ENCODE measurements at regions of chr2 and their contacts with region 1.

Region 1: GRCh38 chr2:105744091-105744908 is 412 bp upstream of the NCK2 start:
- DNase-seq: no peak
- ATAC-seq: peak; percentile 64 to 68
- H3K4me3 ChIP-seq: peak overlapping the region; percentile 70 to 84 (median 74)
- H3K27ac ChIP-seq: peak overlapping the region; percentile 81 to 92 (median 90)
- H3K4me1 ChIP-seq: peaks cover 35 to 48% of the 10 kb centered on the region in 2 donors
- H3K27me3 ChIP-seq: no peaks in the 10 kb centered on the region
- CTCF ChIP-seq: no peak
- POLR2A ChIP-seq: peak in 1 of 2 donors; percentile 41

Region 2: GRCh38 chr2:105388971-105389381 is 355.3 kb before region 1 on chr2:
- in situ Hi-C with region 1: no loop called
- intact Hi-C with region 1: loop called (anchors 10 kb)
- DNase-seq: no peak
- ATAC-seq: peak; percentile 17 to 34
- H3K4me3 ChIP-seq: no peak overlapping the region
- H3K27ac ChIP-seq: peak overlapping the region; percentile 72 to 79 (median 76)
- H3K4me1 ChIP-seq: peaks cover 44 to 56% of the 10 kb centered on the region in 2 donors
- H3K27me3 ChIP-seq: no peaks in the 10 kb centered on the region
- CTCF ChIP-seq: no peak
- POLR2A ChIP-seq: no peak

Region 3: GRCh38 chr2:105541189-105542050 is 202.9 kb before region 1 on chr2:
- in situ Hi-C with region 1: no loop called
- intact Hi-C with region 1: no loop called
- DNase-seq: no peak
- ATAC-seq: no peak
- H3K4me3 ChIP-seq: no peak overlapping the region
- H3K27ac ChIP-seq: no peak overlapping the region
- H3K4me1 ChIP-seq: no peaks in the 10 kb centered on the region
- H3K27me3 ChIP-seq: no peaks in the 10 kb centered on the region
- CTCF ChIP-seq: no peak
- POLR2A ChIP-seq: no peak

Region 4: DNA sequence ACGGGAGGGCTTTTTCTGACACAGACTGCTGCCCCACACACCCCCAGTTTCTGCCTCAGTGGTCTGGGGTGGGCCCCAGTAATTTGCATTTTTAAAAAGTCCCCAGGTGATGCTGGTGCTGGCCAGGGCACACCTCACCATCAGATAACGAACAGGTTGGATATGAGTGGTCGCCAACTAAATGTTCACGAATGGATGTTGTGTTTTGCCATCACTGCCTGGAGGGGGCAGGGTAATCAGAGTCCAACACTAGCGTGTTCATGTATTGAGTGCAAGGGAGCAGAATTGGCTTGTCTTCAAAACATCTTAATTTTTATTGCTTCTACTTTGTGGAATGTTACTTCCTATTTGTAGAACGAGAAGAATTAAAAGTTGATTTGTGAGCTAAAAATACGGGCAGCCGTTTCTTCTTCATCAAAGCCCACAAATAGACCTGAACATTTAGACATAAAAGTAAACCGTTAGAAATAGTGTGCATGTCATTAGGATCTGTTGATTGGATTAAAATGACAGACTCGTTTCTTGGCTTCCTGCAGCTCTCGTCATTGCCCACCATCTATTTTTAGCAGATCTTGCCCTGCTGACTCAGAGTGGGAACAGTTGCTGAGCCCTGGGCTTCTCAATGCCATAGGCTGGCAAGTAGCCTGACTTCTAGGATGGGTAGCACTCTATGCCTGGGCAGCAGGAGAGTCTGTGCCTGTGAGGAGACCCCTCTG is 45.6 kb after region 1 on chr2:
- in situ Hi-C with region 1: no loop called
- intact Hi-C with region 1: loop called (anchors 5 kb)
- DNase-seq: peak; percentile 78 to 88
- ATAC-seq: peak; percentile 97 to 100
- H3K4me3 ChIP-seq: peak overlapping the region; percentile 23 to 45 (median 25)
- H3K27ac ChIP-seq: peak overlapping the region; percentile 76 to 88 (median 80)
- H3K4me1 ChIP-seq: peaks cover 37 to 57% of the 10 kb centered on the region in 2 donors
- H3K27me3 ChIP-seq: no peaks in the 10 kb centered on the region
- CTCF ChIP-seq: no peak
- POLR2A ChIP-seq: no peak

Region 5: DNA sequence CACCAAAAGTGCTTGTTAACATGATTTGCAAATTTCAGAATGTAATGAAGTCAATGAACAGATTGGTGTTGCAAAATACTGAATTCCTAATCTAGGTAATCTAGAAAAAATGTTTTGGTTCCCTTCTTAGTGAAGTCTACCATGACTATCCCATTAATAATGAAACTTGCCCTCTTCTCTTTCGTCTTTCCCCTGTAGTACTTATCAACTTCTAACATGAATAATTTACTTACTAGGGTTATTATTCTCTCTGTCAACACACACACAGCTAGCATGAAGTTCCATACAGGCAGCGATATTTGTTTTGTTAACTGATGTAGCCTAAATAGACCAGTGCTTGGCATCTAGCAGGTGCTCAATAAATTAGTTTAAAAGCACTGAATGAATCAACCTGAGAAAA is 160.6 kb after region 1 on chr2:
- in situ Hi-C with region 1: no loop called
- intact Hi-C with region 1: loop called (anchors 5 kb)
- DNase-seq: no peak
- ATAC-seq: no peak
- H3K4me3 ChIP-seq: no peak overlapping the region
- H3K27ac ChIP-seq: peak overlapping the region in 2 of 4 donors; percentile 83 to 91
- H3K4me1 ChIP-seq: peaks cover 46 to 48% of the 10 kb centered on the region in 2 donors
- H3K27me3 ChIP-seq: no peaks in the 10 kb centered on the region
- CTCF ChIP-seq: no peak
- POLR2A ChIP-seq: no peak

Region 6: GRCh38 chr2:106030287-106031268 is 286.3 kb after region 1 on chr2:
- in situ Hi-C with region 1: loop called in 1 of 4 experiments (anchors 25 kb)
- intact Hi-C with region 1: loop called (anchors 5 kb)
- DNase-seq: peak; percentile 54 to 71
- ATAC-seq: peak; percentile 91 to 96
- H3K4me3 ChIP-seq: peak overlapping the region in 3 of 4 donors; percentile 1 to 26 (median 22)
- H3K27ac ChIP-seq: peak overlapping the region; percentile 72 to 83 (median 78)
- H3K4me1 ChIP-seq: peaks cover 18 to 33% of the 10 kb centered on the region in 2 donors
- H3K27me3 ChIP-seq: no peaks in the 10 kb centered on the region
- CTCF ChIP-seq: no peak
- POLR2A ChIP-seq: no peak